PC-3 (cell line): ENCODE measurements at regions of chr10 and their contacts with region 1.

Region 1: DNA sequence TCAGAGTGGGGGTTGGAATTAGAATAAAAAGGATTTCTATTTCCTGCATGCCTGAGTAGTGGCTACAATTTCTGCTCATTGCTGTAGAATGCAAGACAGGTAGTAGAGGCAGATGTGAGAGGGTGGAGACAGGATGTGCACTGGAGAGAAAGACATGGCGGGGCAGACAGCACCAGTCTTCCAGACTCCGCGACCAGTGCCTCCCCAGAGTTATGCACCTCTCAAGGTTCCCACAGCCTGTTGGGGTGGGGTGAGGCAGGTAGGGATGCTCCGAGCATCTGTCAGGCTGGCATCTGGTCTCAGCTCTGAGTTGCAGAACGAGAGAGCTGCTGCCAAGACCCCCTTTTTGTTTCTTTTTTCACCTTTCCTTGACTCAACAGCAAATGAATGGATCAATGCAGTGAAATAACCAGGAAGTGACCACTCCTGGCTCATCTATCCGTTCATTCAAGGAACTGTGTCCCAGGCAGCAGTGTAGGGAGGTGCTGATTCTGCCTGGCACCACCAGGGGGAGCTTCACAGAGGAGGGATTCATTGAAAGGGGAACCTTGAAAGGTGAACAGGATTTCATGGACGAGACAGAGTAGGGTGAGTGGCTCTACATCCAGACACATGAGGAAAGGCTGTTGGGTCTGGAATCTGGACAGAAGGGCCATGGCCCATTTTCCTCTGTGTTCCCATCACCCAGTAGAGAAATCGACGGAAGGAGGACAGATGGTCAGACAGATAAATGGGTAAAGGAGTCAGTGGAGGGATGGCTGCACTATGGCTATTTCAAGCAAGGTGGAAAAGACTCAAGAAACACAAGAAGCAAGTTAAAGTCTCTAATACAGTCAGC is 17.2 kb upstream of the SLC18A3 start:
- DNase-seq: peak; percentile 99
- ATAC-seq: peak; percentile 86
- H3K4me3 ChIP-seq: no peak overlapping the region
- H3K27ac ChIP-seq: no peak overlapping the region
- H3K4me1 ChIP-seq: peaks cover 8% of the 10 kb centered on the region; the same call in 1 of the 2 replicates
- H3K27me3 ChIP-seq: no peaks in the 10 kb centered on the region
- CTCF ChIP-seq: peak; percentile 100

Region 2: DNA sequence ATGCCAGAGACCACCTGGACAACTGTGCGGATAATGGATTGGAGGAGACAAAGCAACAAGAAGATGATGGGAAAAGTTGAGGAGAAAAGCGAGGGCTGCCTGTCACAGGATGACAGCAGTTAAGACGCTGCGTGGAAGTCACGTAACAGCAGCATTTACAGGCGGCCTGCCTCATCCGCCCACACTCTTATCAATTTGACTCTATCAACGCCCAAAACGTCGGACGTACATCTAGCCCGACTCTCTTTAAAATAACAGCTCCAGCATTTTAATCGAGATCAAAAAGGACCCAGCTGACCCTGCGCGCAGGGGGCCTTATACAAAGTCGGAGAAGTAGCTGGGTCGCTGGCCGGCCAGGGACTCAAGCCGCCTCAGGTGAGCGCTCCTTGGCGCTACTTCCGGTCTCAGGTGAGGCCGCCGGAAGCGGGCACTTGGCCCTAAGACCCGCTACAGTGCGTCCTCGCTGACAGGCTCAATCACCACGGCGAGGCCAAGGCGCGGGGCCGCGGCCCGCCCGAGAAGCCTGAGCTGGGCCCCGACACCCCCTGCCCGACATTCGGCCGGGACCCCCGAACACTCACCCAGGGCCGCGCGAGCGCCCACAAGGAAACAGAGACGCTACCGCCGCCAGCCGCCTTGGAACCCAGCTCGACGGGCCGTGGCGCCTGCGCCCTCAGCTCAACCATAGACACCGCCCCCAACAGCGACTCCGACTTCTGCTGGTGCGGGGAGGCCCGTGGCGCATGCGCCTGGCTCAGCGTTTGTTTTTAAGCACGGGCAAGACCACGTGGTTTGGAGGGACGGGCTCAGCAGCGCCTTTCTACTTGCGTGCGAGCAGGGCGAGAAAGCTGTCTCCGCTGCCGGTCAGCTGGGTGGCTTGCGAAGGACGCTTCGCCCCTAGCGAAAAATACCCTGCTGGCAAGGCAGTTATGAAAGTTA is 54.3 kb before region 1 on chr10 and contains the start of gene ERCC6:
- CTCF ChIA-PET with region 1: interaction called, 8 read pairs
- POLR2A ChIA-PET with region 1: no interaction called
- intact Hi-C with region 1: loop called (anchors 2 kb)
- DNase-seq: peak; percentile 100
- ATAC-seq: peak; percentile 92
- H3K4me3 ChIP-seq: peak within 1 kb of the TSS; percentile 75
- H3K27ac ChIP-seq: peak within 1 kb of the TSS; percentile 75
- H3K4me1 ChIP-seq: peaks cover 49% of the 10 kb centered on the region
- H3K27me3 ChIP-seq: no peaks in the 10 kb centered on the region
- CTCF ChIP-seq: peak; percentile 36; the same call in 1 of the 2 replicates
- total RNA-seq, gene ERCC6: 36.7 and 43.0 TPM in 2 replicates

Region 3: DNA sequence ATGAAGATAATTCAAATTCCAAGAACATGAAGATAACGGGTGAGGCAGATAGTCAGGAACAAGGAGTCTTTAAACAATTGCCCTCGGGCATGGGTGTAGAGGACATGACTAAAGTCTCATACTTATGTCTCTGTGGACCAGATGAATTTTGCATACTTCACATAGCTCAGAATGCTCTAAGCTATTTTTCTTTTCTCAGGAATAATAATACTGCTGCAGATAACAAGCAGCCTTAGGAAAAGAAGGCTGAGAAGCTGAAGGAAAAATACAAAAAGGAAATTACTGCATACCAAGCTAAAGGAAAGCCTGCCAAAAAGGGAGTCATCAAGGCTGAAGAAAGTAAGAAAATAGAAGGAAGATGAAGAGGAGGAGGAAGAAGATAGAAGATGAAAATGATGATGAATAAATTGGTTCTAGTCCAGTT is 40.7 kb before region 1 on chr10:
- CTCF ChIA-PET with region 1: interaction called, 5 read pairs
- POLR2A ChIA-PET with region 1: no interaction called
- intact Hi-C with region 1: loop called (anchors 2 kb)
- DNase-seq: peak; percentile 100
- ATAC-seq: peak; percentile 83
- H3K4me3 ChIP-seq: peak overlapping the region; percentile 6
- H3K27ac ChIP-seq: peak overlapping the region; percentile 89
- H3K4me1 ChIP-seq: peaks cover 44% of the 10 kb centered on the region
- H3K27me3 ChIP-seq: no peaks in the 10 kb centered on the region
- CTCF ChIP-seq: no peak

Region 4: GRCh38 chr10:49783645-49784044 is 190.7 kb after region 1 on chr10:
- CTCF ChIA-PET with region 1: interaction called, 3 read pairs
- POLR2A ChIA-PET with region 1: no interaction called
- intact Hi-C with region 1: loop called (anchors 1 kb)
- DNase-seq: peak; percentile 53
- ATAC-seq: peak; percentile 49
- H3K4me3 ChIP-seq: no peak overlapping the region
- H3K27ac ChIP-seq: no peak overlapping the region
- H3K4me1 ChIP-seq: no peaks in the 10 kb centered on the region
- H3K27me3 ChIP-seq: peaks cover 50% of the 10 kb centered on the region
- CTCF ChIP-seq: peak; percentile 61

Region 5: GRCh38 chr10:50063100-50063499 is 470.2 kb after region 1 on chr10:
- CTCF ChIA-PET with region 1: no interaction called
- POLR2A ChIA-PET with region 1: no interaction called
- intact Hi-C with region 1: loop called (anchors 10 kb)
- DNase-seq: no peak
- ATAC-seq: no peak
- H3K4me3 ChIP-seq: no peak overlapping the region
- H3K27ac ChIP-seq: no peak overlapping the region
- H3K4me1 ChIP-seq: peaks cover 4% of the 10 kb centered on the region; the same call in 1 of the 2 replicates
- H3K27me3 ChIP-seq: 0 out of 2 replicates have a peak, but pooled peaks cover 1% of the 10 kb centered on the region
- CTCF ChIP-seq: no peak; the same call in 1 of the 2 replicates

Region 6: DNA sequence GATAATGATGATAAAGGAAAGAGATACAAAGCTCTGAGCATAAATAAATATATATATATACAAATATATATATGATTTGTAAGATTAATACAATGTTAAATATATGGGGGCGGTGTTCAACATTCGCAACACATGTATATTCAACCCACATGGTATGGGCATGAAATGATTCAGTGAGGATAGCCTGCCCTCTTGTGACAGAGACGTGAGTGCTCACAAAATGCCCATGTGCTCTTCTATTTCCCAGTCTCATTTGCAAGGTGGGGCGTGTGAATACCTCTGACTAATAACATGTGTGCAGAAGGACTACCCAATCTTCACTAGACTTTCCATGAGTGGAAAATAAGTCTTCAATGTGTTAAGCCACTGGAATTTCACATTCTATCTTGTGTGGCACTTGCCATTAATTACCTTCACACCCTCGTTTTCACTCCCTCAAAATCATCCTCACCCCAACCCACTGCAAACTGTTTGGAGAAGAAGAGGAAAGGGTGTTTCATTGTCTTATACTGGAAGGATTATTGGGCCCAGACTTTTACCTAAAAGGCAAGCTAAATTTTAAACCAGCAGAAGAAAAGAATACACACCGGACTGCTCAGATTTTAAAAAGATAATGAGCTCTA is 631.5 kb after region 1 on chr10:
- CTCF ChIA-PET with region 1: no interaction called
- POLR2A ChIA-PET with region 1: no interaction called
- intact Hi-C with region 1: loop called (anchors 10 kb)
- DNase-seq: peak; percentile 99
- ATAC-seq: peak; percentile 99
- H3K4me3 ChIP-seq: no peak overlapping the region
- H3K27ac ChIP-seq: no peak overlapping the region
- H3K4me1 ChIP-seq: peaks cover 6% of the 10 kb centered on the region
- H3K27me3 ChIP-seq: peaks cover 8% of the 10 kb centered on the region; the same call in 1 of the 2 replicates
- CTCF ChIP-seq: peak; percentile 97

Region 7: DNA sequence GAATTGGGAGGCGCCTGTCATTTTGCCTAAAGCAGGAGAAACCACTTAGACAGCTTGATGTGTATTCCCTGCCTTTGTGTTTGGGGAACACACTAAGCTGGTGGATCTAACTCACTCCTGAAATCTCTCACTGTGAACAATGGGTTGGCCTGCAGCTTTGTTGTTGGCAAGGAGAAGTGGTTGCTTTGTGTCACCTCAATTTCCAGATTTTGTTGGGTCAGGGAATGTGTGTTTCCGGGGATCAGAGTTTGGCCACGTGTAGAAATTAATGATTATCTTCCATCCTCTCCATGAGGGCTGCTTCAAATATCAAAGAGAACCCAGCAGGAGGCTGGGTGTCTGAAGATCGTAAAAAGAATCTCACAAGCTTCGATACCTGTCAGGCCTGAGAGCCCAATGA is 1264.6 kb after region 1 on chr10:
- CTCF ChIA-PET with region 1: no interaction called
- POLR2A ChIA-PET with region 1: no interaction called
- intact Hi-C with region 1: no loop called
- DNase-seq: no peak
- ATAC-seq: no peak
- H3K4me3 ChIP-seq: no peak overlapping the region
- H3K27ac ChIP-seq: no peak overlapping the region
- H3K4me1 ChIP-seq: no peaks in the 10 kb centered on the region
- H3K27me3 ChIP-seq: peaks cover 44% of the 10 kb centered on the region
- CTCF ChIP-seq: no peak

Region 8: DNA sequence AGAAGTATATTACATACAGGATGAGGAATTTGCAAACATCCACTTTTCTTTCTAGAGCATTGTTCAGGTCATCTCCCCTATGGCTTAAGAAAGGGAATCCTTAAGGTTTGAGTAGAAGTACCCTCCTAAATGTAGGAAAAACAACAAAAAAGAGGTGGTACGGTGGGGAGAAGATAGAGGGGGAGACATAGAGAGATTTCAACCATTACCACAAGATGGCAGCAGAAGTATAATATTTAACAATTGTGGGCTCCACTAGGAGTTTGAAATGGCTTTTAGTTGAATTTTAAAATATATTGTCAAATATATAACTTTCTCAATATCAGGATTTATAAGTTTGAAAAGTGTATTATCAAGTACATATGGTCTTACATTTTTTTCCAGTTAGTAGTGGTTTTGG is 1408.6 kb after region 1 on chr10:
- CTCF ChIA-PET with region 1: no interaction called
- POLR2A ChIA-PET with region 1: no interaction called
- intact Hi-C with region 1: loop called (anchors 5 kb)
- DNase-seq: peak; percentile 85
- ATAC-seq: peak; percentile 87
- H3K4me3 ChIP-seq: no peak overlapping the region
- H3K27ac ChIP-seq: no peak overlapping the region
- H3K4me1 ChIP-seq: no peaks in the 10 kb centered on the region
- H3K27me3 ChIP-seq: peaks cover 73% of the 10 kb centered on the region
- CTCF ChIP-seq: peak; percentile 99